HepG2 (cell line): ENCODE measurements at regions of chr18 and their contacts with region 1.

Region 1: DNA sequence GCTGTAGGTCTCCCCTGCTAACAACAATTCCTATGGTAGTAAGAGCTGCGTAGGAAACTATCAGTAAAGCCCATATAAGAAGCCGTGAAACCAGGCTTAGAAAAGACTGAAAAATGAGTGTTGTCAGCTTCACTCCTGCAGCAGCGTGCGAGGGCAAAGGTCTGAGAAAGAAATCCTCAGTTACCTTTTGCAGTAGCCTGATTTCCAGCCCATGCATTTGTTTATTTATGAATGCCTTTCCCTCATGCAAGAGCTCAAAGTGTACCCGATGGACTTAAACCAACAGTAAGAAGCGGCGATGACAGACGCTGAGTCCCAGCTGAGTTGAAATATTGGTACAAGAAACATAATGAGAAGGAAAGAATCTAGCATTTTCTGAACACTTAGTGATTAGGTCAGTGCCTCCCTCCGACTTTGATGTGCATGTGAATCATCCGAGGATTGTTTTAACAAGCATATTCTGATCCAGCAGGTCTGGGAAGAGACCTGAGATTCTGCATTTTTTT is 15.0 kb upstream of the POLI start:
- DNase-seq: peak; percentile 98
- ATAC-seq: peak; percentile 98
- H3K4me3 ChIP-seq: peak overlapping the region; percentile 23 to 51 (median 47); a peak in 4 of 6 replicates
- H3K27ac ChIP-seq: peak overlapping the region; percentile 89
- H3K4me1 ChIP-seq: peaks cover 76% of the 10 kb centered on the region
- H3K27me3 ChIP-seq: no peaks in the 10 kb centered on the region; a peak in 1 of 5 replicates
- CTCF ChIP-seq: no peak
- EP300 ChIP-seq: peak; percentile 66 to 78; a peak in 3 of 4 replicates
- POLR2A ChIP-seq: peak in 1 of 2 experiments; percentile 81; a peak in 2 of 4 replicates
- RAD21 ChIP-seq: no peak

Region 2: GRCh38 chr18:54269893-54270844 is 15.9 kb after region 1 on chr18:
- CTCF ChIA-PET with region 1: no interaction called
- POLR2A ChIA-PET with region 1: interaction called, 34 read pairs
- in situ Hi-C with region 1: no loop called
- intact Hi-C with region 1: loop called (anchors 1 kb)
- DNase-seq: peak; percentile 35
- ATAC-seq: peak; percentile 81
- H3K4me3 ChIP-seq: peak overlapping the region; percentile 84 to 95 (median 88)
- H3K27ac ChIP-seq: peak overlapping the region; percentile 68
- H3K4me1 ChIP-seq: peaks cover 19% of the 10 kb centered on the region
- H3K27me3 ChIP-seq: no peaks in the 10 kb centered on the region
- CTCF ChIP-seq: peak; percentile 61
- EP300 ChIP-seq: no peak
- POLR2A ChIP-seq: no peak; a peak in 1 of 4 replicates
- RAD21 ChIP-seq: peak; percentile 51

Region 3: GRCh38 chr18:54296062-54296461 is 41.7 kb after region 1 on chr18:
- CTCF ChIA-PET with region 1: no interaction called
- POLR2A ChIA-PET with region 1: no interaction called
- in situ Hi-C with region 1: no loop called
- intact Hi-C with region 1: no loop called
- DNase-seq: no peak
- ATAC-seq: no peak
- H3K4me3 ChIP-seq: no peak overlapping the region
- H3K27ac ChIP-seq: no peak overlapping the region
- H3K4me1 ChIP-seq: no peaks in the 10 kb centered on the region
- H3K27me3 ChIP-seq: no peaks in the 10 kb centered on the region
- CTCF ChIP-seq: no peak
- EP300 ChIP-seq: no peak
- POLR2A ChIP-seq: no peak
- RAD21 ChIP-seq: no peak